ENCODE measurements at regions of chr19 and their contacts with region 1.

Region 1: DNA sequence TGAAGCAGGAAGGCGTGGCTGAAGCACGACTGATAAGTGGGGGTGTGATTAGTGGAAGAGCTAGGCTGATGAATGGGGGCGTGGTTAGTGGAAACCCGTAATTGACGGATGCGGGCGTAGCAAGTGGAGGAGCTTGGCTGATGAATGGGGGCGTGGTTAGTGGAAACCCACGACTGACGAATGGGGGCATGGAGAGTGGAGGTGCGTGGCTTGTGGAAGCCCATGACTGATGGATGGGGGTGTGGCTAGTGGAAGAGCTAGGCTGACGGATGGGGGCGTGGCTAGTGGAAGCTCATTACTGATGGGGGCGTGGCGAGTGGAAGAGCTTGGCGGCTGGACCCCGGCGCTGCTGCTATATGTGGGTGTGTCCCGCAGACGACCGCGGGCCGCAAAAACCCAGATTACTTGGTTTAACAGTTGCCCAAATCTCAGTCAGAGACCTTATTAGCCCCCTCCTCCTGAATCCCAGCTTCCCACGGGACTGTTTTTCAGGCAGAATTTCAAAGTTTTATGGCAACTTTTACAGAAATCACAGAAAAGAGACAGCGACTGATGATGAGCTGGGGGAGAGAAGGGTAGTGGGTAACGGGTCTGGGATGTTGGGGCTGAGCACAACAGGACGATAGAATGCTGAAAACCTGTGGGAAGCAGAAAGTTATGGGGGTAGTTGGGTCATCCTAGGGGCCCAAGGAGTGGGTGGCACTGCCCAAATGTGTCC is 9.0 kb upstream of the MEIS3 start:
- DNase-seq: peak; percentile 20 to 91 (median 76)
- ATAC-seq: peak; percentile 59 to 86 (median 68)
- H3K4me3 ChIP-seq: peak overlapping the region; percentile 11 to 32
- H3K4me3 Mint-ChIP-seq: no peak overlapping the region
- H3K27ac ChIP-seq: no peak overlapping the region
- H3K27ac Mint-ChIP-seq: no peak overlapping the region
- H3K4me1 ChIP-seq: peaks cover 23 to 38% of the 10 kb centered on the region in 2 experiments
- H3K4me1 Mint-ChIP-seq: peaks cover 10 to 18% (median 11%) of the 10 kb centered on the region in 3 donors
- H3K27me3 ChIP-seq: peaks cover 11 to 83% of the 10 kb centered on the region in 2 experiments
- H3K27me3 Mint-ChIP-seq: peaks cover 37 to 60% of the 10 kb centered on the region in 2 donors

Region 2: GRCh38 chr19:46211201-46211881 is 1217.0 kb before region 1 on chr19:
- CTCF ChIA-PET with region 1: no interaction called
- POLR2A ChIA-PET with region 1: no interaction called
- DNase-seq: no peak
- ATAC-seq: no peak
- H3K4me3 ChIP-seq: no peak overlapping the region
- H3K4me3 Mint-ChIP-seq: no peak overlapping the region
- H3K27ac ChIP-seq: no peak overlapping the region
- H3K27ac Mint-ChIP-seq: no peak overlapping the region
- H3K4me1 ChIP-seq: no peaks in the 10 kb centered on the region
- H3K4me1 Mint-ChIP-seq: peaks cover 4 to 13% (median 6%) of the 10 kb centered on the region in 3 donors
- H3K27me3 ChIP-seq: peaks cover 7 to 31% of the 10 kb centered on the region in 2 experiments
- H3K27me3 Mint-ChIP-seq: peaks cover 27 to 48% of the 10 kb centered on the region in 2 donors

Region 3: GRCh38 chr19:47130591-47131227 is 297.6 kb before region 1 on chr19 and contains the start of gene SAE1:
- CTCF ChIA-PET with region 1: no interaction called
- POLR2A ChIA-PET with region 1: no interaction called
- DNase-seq: peak; percentile 75 to 95 (median 85)
- ATAC-seq: peak; percentile 87 to 92 (median 90)
- H3K4me3 ChIP-seq: peak within 1 kb of the TSS; percentile 71 to 90
- H3K4me3 Mint-ChIP-seq: peak within 1 kb of the TSS; percentile 98 to 100 (median 99)
- H3K27ac ChIP-seq: peak within 1 kb of the TSS; percentile 52
- H3K27ac Mint-ChIP-seq: peak within 1 kb of the TSS; percentile 89 to 97
- H3K4me1 ChIP-seq: peaks cover 4 to 41% of the 10 kb centered on the region in 2 experiments
- H3K4me1 Mint-ChIP-seq: peaks cover 49 to 56% (median 53%) of the 10 kb centered on the region in 3 donors
- H3K27me3 ChIP-seq: no peaks in the 10 kb centered on the region
- H3K27me3 Mint-ChIP-seq: no peaks in the 10 kb centered on the region
- total RNA-seq, gene SAE1: 42.6 to 54.9 (median 44.0) TPM

Region 4: GRCh38 chr19:47348819-47349795 is 79.2 kb before region 1 on chr19 and contains the start of gene DHX34:
- CTCF ChIA-PET with region 1: interaction called in 1 of 2 experiments, 13 read pairs
- POLR2A ChIA-PET with region 1: interaction called in 1 of 2 experiments, 7 read pairs
- DNase-seq: peak; percentile 96 to 100 (median 99)
- ATAC-seq: peak; percentile 95 to 100 (median 97)
- H3K4me3 ChIP-seq: peak within 1 kb of the TSS; percentile 74 to 84
- H3K4me3 Mint-ChIP-seq: peak within 1 kb of the TSS; percentile 96 to 99 (median 99)
- H3K27ac ChIP-seq: peak within 1 kb of the TSS; percentile 40
- H3K27ac Mint-ChIP-seq: peak within 1 kb of the TSS; percentile 89 to 95
- H3K4me1 ChIP-seq: peaks cover 5 to 22% of the 10 kb centered on the region in 2 experiments
- H3K4me1 Mint-ChIP-seq: peaks cover 34 to 39% (median 38%) of the 10 kb centered on the region in 3 donors
- H3K27me3 ChIP-seq: peaks cover 0 to under 1% of the 10 kb centered on the region in 2 experiments
- H3K27me3 Mint-ChIP-seq: no peaks in the 10 kb centered on the region
- total RNA-seq, gene DHX34: 13.4 to 30.7 (median 28.8) TPM